B cell (primary cell): ENCODE measurements at regions of chr6 and their contacts with region 1.

Region 1: DNA sequence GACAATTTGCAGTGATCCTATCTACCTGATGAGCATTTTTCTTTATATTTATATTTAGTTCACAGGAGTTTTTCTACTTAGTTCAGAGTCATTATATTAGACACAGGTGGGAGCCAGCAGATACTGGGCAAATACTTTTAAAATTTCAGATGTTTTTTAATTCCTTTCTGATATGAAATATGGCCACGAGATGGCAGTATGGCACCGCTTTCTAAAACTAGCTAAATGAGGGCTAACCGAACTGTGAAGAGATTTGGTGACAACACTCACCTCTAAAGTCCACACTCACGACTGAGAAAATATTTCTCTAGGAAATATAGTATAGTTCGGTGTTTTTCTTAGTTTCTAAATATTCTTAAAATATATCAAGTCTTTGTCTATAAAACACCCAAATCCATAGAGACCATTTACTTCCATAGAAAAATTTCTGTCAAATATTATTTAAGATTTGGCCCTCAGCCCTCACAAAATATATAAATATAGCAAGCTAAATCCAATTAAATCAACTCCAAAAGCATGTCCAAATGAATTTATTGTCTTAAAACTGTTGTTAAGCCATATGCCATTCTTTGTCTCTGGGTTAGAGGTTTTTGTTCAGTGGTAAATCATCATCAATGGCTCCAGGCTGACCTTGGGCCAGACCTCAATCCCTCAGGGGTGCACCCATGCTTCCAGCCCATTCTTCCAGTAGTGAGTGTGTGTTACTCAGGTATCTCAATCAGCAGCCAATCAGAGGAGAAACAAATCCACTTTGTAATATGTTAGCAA is 63.6 kb downstream of the HUS1B start:
- DNase-seq: peak; percentile 74
- ATAC-seq: peak; percentile 33
- H3K4me3 ChIP-seq: no peak overlapping the region
- H3K4me3 Mint-ChIP-seq: no peak overlapping the region
- H3K27ac ChIP-seq: no peak overlapping the region
- H3K27ac Mint-ChIP-seq: no peak overlapping the region
- H3K4me1 ChIP-seq: no peaks in the 10 kb centered on the region
- H3K4me1 Mint-ChIP-seq: no peaks in the 10 kb centered on the region
- H3K27me3 ChIP-seq: no peaks in the 10 kb centered on the region
- H3K27me3 Mint-ChIP-seq: no peaks in the 10 kb centered on the region
- CTCF ChIP-seq: peak; percentile 90

Region 2: DNA sequence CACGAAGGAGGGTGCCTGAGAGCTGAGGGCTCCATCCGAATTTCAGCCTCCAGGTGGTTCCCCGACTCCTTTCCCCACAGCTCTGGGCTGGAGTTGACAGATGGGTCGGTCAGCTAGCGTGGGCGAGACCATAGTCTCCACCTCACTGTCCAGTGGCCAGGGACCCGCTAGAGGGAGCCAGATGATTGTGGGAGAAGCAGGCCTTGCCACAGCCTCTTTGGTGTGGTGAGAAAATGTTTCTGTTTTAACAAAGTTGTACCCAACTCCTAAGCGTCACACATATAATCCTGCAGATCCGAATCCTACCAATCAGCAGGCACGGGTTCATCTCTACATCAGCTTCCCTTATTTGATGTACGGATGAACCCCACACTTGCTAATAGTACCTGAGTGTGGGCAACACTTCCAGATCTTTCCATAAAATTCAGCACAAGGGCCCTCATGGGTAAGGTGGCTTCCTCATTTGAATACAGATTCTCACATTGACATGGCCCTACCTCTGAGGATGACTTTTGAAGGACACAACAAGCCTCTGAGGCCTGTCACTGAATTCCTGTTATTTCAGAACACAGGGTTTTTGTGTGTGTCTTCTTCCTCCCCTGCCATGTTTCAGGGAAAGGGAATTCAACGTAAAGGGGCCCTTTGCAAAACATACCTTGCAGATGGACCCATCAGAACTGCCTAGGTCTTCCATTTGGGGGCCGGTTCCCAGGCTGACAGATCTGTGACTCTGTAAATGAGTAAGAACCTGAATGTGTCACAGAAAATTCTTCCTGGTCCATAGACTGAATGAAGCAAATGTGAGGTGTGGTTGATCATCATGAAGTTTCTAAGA is 404.3 kb before region 1 on chr6:
- CTCF ChIA-PET with region 1: interaction called, 12 read pairs
- POLR2A ChIA-PET with region 1: no interaction called
- intact Hi-C with region 1: loop called (anchors 1 kb)
- DNase-seq: peak; percentile 81
- ATAC-seq: peak; percentile 68
- H3K4me3 ChIP-seq: no peak overlapping the region
- H3K4me3 Mint-ChIP-seq: no peak overlapping the region
- H3K27ac ChIP-seq: no peak overlapping the region
- H3K27ac Mint-ChIP-seq: peak overlapping the region; percentile 10
- H3K4me1 ChIP-seq: peaks cover 62 to 80% of the 10 kb centered on the region in 2 donors
- H3K4me1 Mint-ChIP-seq: peaks cover 75% of the 10 kb centered on the region
- H3K27me3 ChIP-seq: no peaks in the 10 kb centered on the region
- H3K27me3 Mint-ChIP-seq: no peaks in the 10 kb centered on the region
- CTCF ChIP-seq: peak; percentile 82

Region 3: GRCh38 chr6:582370-582769 is 11.0 kb before region 1 on chr6:
- CTCF ChIA-PET with region 1: interaction called, 23 read pairs
- POLR2A ChIA-PET with region 1: no interaction called
- intact Hi-C with region 1: no loop called
- DNase-seq: no peak
- ATAC-seq: no peak
- H3K4me3 ChIP-seq: no peak overlapping the region
- H3K4me3 Mint-ChIP-seq: no peak overlapping the region
- H3K27ac ChIP-seq: no peak overlapping the region
- H3K27ac Mint-ChIP-seq: no peak overlapping the region
- H3K4me1 ChIP-seq: no peaks in the 10 kb centered on the region
- H3K4me1 Mint-ChIP-seq: no peaks in the 10 kb centered on the region
- H3K27me3 ChIP-seq: no peaks in the 10 kb centered on the region
- H3K27me3 Mint-ChIP-seq: no peaks in the 10 kb centered on the region
- CTCF ChIP-seq: no peak

Region 4: DNA sequence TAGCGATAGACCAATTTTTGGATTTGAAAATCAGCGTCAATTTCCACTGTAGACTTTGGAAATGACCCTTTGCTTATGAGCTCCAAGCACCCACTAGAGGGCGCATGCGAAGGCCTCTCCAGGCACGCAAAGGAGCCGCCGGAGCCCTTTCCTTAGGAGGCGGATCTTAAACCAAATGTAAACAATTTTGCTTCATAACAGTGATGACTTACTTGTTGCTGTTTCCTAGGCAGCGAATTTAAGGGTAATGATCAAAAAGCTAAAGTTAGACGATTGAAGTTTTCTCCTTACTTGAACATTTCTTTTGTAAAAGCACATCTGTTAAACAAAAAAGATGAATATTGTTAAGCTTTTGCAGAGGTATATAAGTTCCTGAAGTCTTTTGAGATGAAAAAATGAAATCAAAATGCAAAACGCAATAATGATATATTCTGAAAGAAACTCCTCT is 128.8 kb after region 1 on chr6:
- CTCF ChIA-PET with region 1: interaction called, 27 read pairs
- POLR2A ChIA-PET with region 1: no interaction called
- intact Hi-C with region 1: loop called (anchors 2 kb)
- DNase-seq: peak; percentile 72
- ATAC-seq: peak; percentile 43
- H3K4me3 ChIP-seq: no peak overlapping the region
- H3K4me3 Mint-ChIP-seq: no peak overlapping the region
- H3K27ac ChIP-seq: no peak overlapping the region
- H3K27ac Mint-ChIP-seq: no peak overlapping the region
- H3K4me1 ChIP-seq: peaks cover 0 to 5% of the 10 kb centered on the region in 2 donors
- H3K4me1 Mint-ChIP-seq: peaks cover 6% of the 10 kb centered on the region
- H3K27me3 ChIP-seq: peaks cover 0 to 5% (median 2%) of the 10 kb centered on the region in 4 experiments
- H3K27me3 Mint-ChIP-seq: peaks cover 43% of the 10 kb centered on the region
- CTCF ChIP-seq: peak; percentile 95

Region 5: DNA sequence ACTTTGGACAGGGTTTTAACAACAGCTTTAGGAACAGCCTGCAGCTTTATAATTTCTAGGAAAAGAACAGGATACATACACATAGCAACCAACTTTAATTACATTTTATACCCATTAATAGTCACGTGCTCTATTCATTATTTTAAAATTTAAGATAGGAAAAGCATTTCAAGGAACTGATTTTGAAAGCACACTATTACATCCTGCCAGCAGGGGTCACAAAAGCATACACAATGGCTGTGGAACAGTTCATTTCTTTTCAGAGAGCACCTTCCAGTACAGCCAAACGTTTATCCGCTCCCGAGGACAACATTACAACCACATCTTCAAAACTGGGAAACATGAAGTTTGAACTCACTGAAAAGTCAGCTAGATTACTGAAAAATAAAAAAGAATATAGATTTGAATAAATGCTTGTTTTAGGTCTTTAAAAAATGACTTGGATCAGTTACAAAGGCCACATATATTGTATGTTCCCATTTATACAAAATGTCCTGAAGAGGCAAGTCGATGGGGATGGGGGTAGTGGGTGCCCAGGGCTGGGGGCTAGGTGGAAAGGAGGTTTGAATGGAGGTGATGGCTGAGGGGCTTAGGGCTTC is 204.3 kb after region 1 on chr6:
- CTCF ChIA-PET with region 1: interaction called, 14 read pairs
- POLR2A ChIA-PET with region 1: no interaction called
- intact Hi-C with region 1: no loop called
- DNase-seq: peak; percentile 65
- ATAC-seq: no peak
- H3K4me3 ChIP-seq: no peak overlapping the region
- H3K4me3 Mint-ChIP-seq: no peak overlapping the region
- H3K27ac ChIP-seq: no peak overlapping the region
- H3K27ac Mint-ChIP-seq: no peak overlapping the region
- H3K4me1 ChIP-seq: peaks cover 7 to 19% of the 10 kb centered on the region in 2 donors
- H3K4me1 Mint-ChIP-seq: peaks cover 14% of the 10 kb centered on the region
- H3K27me3 ChIP-seq: peaks cover 0 to 5% (median 4%) of the 10 kb centered on the region in 4 experiments
- H3K27me3 Mint-ChIP-seq: peaks cover 37% of the 10 kb centered on the region
- CTCF ChIP-seq: peak; percentile 84

Region 6: DNA sequence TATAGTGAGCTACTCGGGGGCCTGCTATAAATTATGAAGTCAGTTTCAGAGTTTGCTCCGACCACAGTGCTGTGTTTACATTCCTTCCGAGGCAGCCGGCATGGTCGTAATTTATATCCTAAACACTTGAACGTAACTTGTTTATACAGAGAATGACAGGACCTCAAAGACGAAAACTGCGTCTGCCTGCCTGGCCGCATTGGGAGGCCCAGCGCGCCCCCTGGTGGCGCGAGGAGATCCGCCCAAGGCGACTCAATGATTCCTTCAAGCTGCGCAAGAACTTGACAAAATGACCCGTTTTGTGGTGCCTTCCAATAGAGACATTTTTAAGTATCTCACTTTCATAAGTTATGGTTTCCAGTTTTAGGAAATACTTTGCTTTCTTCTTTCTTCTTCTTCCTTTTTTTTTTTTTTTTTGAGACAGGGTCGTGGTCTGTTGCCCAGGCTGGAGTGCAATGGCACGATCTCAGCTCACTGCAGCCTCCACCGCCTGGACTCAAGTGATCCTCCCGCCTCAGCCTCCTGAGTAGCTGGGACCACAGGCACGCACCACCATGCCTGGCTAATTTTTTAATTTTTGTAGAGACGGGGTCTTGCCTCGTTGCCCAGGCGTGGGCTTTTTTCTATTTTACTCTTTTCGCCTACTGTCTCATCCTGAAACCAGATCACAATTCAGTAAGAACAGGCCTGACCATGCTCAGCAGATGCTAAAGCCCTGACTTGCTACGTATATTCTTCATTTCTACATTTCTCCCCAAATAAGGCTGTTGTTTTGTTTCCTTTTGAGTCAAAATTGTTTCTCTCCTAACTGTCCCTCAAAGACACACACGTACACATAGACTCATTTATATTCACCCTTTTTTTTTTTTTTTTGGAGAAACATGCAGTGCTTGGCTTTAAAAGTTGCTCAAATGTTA is 803.9 kb after region 1 on chr6:
- CTCF ChIA-PET with region 1: interaction called, 115 read pairs
- POLR2A ChIA-PET with region 1: no interaction called
- intact Hi-C with region 1: loop called (anchors 1 kb)
- DNase-seq: peak; percentile 80
- ATAC-seq: peak; percentile 43
- H3K4me3 ChIP-seq: no peak overlapping the region
- H3K4me3 Mint-ChIP-seq: no peak overlapping the region
- H3K27ac ChIP-seq: no peak overlapping the region
- H3K27ac Mint-ChIP-seq: no peak overlapping the region
- H3K4me1 ChIP-seq: peaks cover 17 to 19% of the 10 kb centered on the region in 2 donors
- H3K4me1 Mint-ChIP-seq: peaks cover 9% of the 10 kb centered on the region
- H3K27me3 ChIP-seq: peaks cover 0 to 65% (median 40%) of the 10 kb centered on the region in 4 experiments
- H3K27me3 Mint-ChIP-seq: peaks cover 57% of the 10 kb centered on the region
- CTCF ChIP-seq: peak; percentile 99